AG04449 (cell line): ENCODE measurements at regions of chr2 and their contacts with region 1.

Region 1: DNA sequence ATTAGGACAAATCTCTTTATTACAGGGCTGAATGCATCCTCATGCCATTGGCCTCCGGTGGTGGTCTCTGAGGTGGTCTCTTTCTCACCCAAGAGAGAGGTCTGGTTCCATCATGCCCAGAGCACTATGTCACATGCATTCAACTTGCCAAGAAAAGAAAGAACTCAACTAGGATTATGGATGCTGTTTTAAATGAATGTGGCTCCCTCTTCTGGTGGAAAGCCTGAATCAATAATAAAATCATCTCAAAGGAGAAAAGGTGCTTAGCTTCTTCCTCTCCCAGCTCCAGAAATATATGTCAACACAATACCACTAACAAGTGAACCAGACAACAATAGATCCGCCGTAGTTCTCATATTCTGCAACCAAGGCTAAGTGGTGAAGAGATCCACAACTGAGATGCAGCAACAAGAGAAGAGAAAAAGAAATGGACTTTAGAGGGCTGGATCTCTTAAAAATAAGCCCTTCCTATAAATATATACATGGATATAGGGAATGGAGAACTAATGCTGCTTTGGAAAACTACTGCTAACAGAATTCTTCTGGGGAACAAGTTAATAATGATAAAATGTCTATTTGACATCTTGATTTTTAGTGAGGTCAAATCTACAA is 396.8 kb downstream of the NCKAP5 start:
- DNase-seq: no peak
- H3K4me3 ChIP-seq: no peak overlapping the region
- CTCF ChIP-seq: peak; percentile 44

Region 2: GRCh38 chr2:132582353-132582739 is 589.2 kb before region 1 on chr2:
- CTCF ChIA-PET with region 1: interaction called, 20 read pairs
- POLR2A ChIA-PET with region 1: no interaction called
- DNase-seq: no peak
- H3K4me3 ChIP-seq: no peak overlapping the region
- CTCF ChIP-seq: peak; percentile 74